ENCODE measurements at regions of chr12 and their contacts with region 1.

Region 1: GRCh38 chr12:107093417-107094182 is at the start of gene CRY1:
- DNase-seq: peak; percentile 96
- ATAC-seq: peak; percentile 95 to 98 (median 97)
- H3K4me3 ChIP-seq: peak within 1 kb of the TSS; percentile 69 to 93 (median 86)
- H3K27ac ChIP-seq: peak within 1 kb of the TSS; percentile 92 to 98 (median 94)
- H3K4me1 ChIP-seq: peaks cover 0 to 31% (median 26%) of the 10 kb centered on the region in 9 donors
- H3K27me3 ChIP-seq: no peaks in the 10 kb centered on the region
- CTCF ChIP-seq: peak in 1 of 9 donors; percentile 8
- total RNA-seq, gene CRY1: 6.5 to 18.7 (median 11.0) TPM

Region 2: DNA sequence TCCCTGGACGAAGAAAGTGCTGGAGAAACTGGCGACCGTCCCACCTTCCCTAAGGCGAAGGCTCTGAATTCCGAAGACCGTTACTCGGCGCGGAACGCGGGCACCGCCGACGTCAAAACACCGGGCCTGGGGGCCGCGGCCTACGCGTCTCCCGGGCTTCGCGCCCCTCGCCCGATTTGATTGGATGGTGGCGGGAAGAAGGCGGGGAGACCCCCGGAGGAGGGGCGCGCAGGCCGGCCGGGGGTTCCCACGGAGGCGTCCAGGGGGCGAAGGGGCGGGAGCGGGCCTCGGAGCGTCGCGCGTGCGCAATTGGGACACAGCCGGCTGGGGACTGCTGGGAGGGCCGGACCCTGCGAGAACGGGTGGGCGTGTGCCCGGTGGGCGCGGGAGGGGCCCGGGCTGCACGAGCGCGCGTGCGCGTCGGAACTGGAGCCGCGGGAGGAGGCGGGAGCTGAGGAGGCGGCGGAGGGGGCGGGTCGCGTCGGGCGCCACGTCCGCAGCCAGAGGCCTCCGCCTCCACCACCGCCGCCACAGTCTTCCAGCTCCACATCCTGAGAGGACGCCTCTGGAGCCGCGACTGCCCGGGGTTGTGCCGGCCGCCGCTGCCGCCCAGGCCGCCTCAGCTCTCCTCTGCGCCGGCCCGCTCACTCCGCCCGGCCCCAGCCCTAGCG is 138.1 kb before region 1 on chr12 and contains the start of gene TMEM263:
- intact Hi-C with region 1: loop called in 6 of 10 experiments (anchors 5 to 10 kb)
- DNase-seq: peak; percentile 95 to 98
- ATAC-seq: peak; percentile 91 to 97 (median 95)
- H3K4me3 ChIP-seq: peak within 1 kb of the TSS; percentile 78 to 98 (median 94)
- H3K27ac ChIP-seq: peak within 1 kb of the TSS; percentile 96 to 100 (median 98)
- H3K4me1 ChIP-seq: peaks cover 4 to 49% (median 32%) of the 10 kb centered on the region in 9 donors
- H3K27me3 ChIP-seq: peaks cover 0 to 19% (median 0%) of the 10 kb centered on the region in 7 donors
- CTCF ChIP-seq: peak in 1 of 9 donors; percentile 6
- total RNA-seq, gene TMEM263: 31.1 to 47.5 (median 37.0) TPM

Region 3: DNA sequence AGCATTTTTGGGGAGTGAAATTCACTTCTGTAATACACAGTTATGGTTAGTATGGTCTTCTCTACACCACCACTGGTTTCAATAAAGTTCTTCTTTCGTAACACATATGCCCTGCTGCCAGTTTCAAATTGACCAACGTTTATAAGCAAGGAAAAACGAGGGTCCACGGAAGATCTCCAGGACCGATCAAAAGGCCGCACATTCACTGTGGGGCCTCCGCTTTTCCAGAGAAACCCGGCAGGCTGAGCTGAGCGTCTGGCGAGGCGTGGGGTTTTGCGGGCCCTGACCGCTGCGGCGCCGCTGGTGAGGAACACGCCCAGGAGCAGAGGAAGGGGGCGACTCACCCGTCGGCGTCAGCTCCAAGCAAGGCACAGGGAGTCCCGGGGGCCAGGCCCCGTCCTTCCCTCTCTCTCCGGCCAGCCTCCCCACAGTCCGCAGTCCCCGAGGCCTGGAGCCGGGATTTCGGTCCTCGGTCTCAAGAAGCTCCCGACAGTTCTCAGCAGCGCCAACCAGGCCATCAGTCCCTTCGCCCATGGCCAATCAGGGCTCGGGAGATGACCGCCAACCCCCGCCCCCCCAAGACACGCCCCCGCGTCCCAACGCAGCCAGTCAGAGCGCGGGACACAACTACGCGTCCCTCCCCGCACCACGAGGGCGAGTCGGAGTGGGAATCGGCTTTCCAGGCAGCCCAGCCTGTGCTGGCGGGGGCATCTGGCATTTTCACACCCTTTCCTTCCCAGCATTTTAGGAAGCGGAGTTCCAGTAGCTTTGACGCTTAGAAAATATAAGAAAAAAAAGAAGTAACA is 106.8 kb before region 1 on chr12 and contains the start of gene MTERF2:
- intact Hi-C with region 1: loop called in 6 of 10 experiments (anchors 2 to 10 kb)
- DNase-seq: peak; percentile 92 to 95
- ATAC-seq: peak; percentile 98 to 100 (median 99)
- H3K4me3 ChIP-seq: peak within 1 kb of the TSS; percentile 60 to 86 (median 72)
- H3K27ac ChIP-seq: peak within 1 kb of the TSS; percentile 76 to 93 (median 90)
- H3K4me1 ChIP-seq: peaks cover 4 to 30% (median 23%) of the 10 kb centered on the region in 9 donors
- H3K27me3 ChIP-seq: no peaks in the 10 kb centered on the region
- CTCF ChIP-seq: peak in 2 of 9 donors; percentile 11 to 24
- total RNA-seq, gene MTERF2: 18.1 to 42.4 (median 28.0) TPM

Region 4: GRCh38 chr12:107007411-107007810 is 86.2 kb before region 1 on chr12:
- intact Hi-C with region 1: loop called in 1 of 10 experiments (anchors 10 kb)
- DNase-seq: no peak
- ATAC-seq: no peak
- H3K4me3 ChIP-seq: no peak overlapping the region
- H3K27ac ChIP-seq: no peak overlapping the region
- H3K4me1 ChIP-seq: no peaks in the 10 kb centered on the region
- H3K27me3 ChIP-seq: no peaks in the 10 kb centered on the region
- CTCF ChIP-seq: no peak

Region 5: DNA sequence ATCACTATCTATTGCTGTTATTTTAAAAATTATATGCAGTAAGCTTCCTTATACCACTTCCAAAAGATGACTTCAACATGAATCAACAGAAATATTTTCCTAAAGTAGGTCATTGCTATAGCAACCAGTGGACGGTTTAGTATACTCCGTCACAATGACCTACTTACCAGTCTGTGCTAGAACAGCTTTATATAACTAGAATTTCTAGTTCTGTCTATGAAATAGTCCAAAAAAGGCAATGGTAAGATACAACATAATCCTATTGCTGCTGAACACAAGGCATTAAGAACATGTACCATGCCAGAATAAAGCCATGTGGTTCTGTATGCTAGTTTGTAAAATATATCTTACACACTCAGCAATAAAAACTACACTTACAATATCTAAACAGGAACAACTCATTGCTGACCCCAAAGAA is 66.0 kb before region 1 on chr12:
- intact Hi-C with region 1: loop called in 3 of 10 experiments (anchors 5 kb)
- DNase-seq: peak in 1 of 2 donors; percentile 16
- ATAC-seq: peak; percentile 87 to 98 (median 94)
- H3K4me3 ChIP-seq: peak overlapping the region in 1 of 10 donors; percentile 3
- H3K27ac ChIP-seq: peak overlapping the region; percentile 9 to 79 (median 46)
- H3K4me1 ChIP-seq: peaks cover 4 to 71% (median 46%) of the 10 kb centered on the region in 9 donors
- H3K27me3 ChIP-seq: no peaks in the 10 kb centered on the region
- CTCF ChIP-seq: no peak

Region 6: GRCh38 chr12:107033758-107034739 is 59.6 kb before region 1 on chr12:
- intact Hi-C with region 1: loop called in 3 of 10 experiments (anchors 5 kb)
- DNase-seq: no peak
- ATAC-seq: no peak
- H3K4me3 ChIP-seq: no peak overlapping the region
- H3K27ac ChIP-seq: no peak overlapping the region
- H3K4me1 ChIP-seq: peaks cover 0 to 44% (median 22%) of the 10 kb centered on the region in 9 donors
- H3K27me3 ChIP-seq: no peaks in the 10 kb centered on the region
- CTCF ChIP-seq: no peak